ENCODE measurements at regions of chr3 and their contacts with region 1.

Region 1: DNA sequence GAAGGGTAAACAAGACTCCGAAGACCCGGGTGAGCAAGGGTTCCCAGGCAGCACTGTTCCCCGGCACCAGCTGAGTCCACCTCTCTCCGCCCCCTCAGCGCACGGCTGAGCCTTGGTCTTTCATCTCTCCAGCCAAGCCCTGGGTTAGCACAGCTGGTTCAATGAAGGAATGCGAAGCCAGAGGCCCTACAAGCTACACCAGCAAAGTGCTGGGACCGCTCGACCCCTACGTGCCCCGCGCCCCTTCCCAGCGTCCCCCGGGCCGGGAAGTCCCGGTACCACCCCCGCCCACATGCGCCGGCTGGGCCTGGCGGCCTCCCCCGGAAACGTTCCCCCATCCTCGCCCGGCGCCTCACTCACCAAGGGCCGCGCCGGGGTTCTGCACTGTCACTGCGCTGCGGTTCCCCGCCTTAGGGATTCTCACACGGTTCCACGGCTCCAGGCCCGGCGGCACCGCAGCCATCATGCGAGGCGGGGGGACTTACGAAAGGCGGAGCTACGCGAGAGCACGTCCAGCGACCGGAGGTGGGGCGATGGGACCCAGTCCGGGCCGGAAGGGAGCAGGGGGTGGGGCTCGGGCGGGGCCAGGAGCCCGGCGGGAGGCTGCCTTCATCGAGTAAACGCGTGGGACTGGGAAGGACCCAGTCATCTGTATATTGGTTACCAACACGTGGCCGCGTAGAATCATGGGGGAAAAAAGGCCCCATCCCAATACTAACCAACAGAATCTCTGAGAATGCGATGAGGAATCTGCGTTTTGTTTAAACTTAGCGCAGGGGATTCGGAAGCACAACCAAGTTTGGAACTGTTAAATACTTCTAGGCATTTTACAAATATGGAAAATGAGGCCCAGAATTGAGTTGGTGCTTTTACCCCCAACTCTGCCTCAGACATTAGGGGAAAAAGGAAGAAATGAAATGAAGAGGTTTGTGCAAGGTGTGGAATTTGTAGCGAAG is 28.7 kb downstream of the GTPBP8 start:
- DNase-seq: peak; percentile 76 to 89 (median 81)
- H3K4me3 ChIP-seq: peak overlapping the region; percentile 59 to 89
- H3K4me3 Mint-ChIP-seq: peak overlapping the region; percentile 92 to 97 (median 96)
- H3K27ac ChIP-seq: peak overlapping the region; percentile 89
- H3K27ac Mint-ChIP-seq: peak overlapping the region; percentile 91 to 98 (median 95)
- H3K4me1 ChIP-seq: peaks cover 45% of the 10 kb centered on the region
- H3K4me1 Mint-ChIP-seq: peaks cover 42 to 76% (median 61%) of the 10 kb centered on the region in 4 donors
- H3K27me3 ChIP-seq: no peaks in the 10 kb centered on the region
- H3K27me3 Mint-ChIP-seq: no peaks in the 10 kb centered on the region

Region 2: DNA sequence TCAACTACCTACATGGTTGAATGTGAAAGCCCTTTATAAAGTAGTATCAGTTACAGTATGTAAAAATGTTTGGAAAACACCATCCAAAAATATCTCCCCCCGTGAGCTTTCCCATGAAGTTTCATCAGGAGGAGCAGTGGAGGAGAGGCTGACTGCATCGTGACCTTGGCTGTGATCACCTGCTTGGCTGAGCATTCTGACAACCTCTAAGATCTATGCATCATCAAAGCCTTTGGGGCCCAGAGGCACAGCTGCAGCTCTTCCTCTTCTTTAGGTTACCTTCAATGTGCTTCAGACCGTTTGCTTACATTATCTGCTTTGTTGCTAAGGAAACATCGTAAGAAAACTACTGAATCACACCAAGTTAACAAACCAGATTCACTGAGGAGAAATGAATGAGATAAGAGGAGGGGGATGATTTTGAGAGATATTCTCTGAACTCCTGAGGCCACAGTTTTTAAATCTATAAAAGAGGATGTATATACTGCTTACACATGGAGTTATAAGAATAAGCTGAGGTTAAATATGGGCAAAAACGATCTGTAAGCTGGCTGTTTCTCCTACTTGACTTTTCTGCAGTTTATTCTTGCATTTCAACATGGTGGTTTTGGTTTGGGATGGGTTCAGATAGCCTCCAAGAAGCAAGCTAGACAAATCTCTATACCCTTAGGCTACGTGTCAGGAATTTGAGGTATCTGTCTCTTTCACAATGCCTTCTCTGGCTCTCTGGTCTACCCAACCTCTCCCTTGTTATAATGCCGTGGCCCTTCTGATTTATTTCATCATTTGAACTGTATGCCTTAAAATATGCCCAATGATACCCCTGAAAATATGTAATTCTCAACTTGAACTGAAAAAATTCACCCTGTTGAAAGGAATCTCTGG is 890.4 kb before region 1 on chr3:
- CTCF ChIA-PET with region 1: no interaction called
- POLR2A ChIA-PET with region 1: no interaction called
- intact Hi-C with region 1: loop called (anchors 1 kb)
- DNase-seq: peak; percentile 78 to 86 (median 82)
- H3K4me3 ChIP-seq: no peak overlapping the region
- H3K4me3 Mint-ChIP-seq: peak overlapping the region in 7 of 8 donors; percentile 38 to 74 (median 59)
- H3K27ac ChIP-seq: peak overlapping the region; percentile 67
- H3K27ac Mint-ChIP-seq: peak overlapping the region; percentile 78 to 97 (median 95)
- H3K4me1 ChIP-seq: peaks cover 93% of the 10 kb centered on the region
- H3K4me1 Mint-ChIP-seq: peaks cover 70 to 93% (median 82%) of the 10 kb centered on the region in 4 donors
- H3K27me3 ChIP-seq: no peaks in the 10 kb centered on the region
- H3K27me3 Mint-ChIP-seq: no peaks in the 10 kb centered on the region

Region 3: GRCh38 chr3:112990672-112991602 is 28.5 kb before region 1 on chr3 and contains the start of gene GTPBP8:
- CTCF ChIA-PET with region 1: interaction called, 6 read pairs
- POLR2A ChIA-PET with region 1: interaction called, 47 read pairs
- intact Hi-C with region 1: loop called (anchors 1 kb)
- DNase-seq: peak; percentile 79 to 88 (median 81)
- H3K4me3 ChIP-seq: peak within 1 kb of the TSS; percentile 73 to 91
- H3K4me3 Mint-ChIP-seq: peak within 1 kb of the TSS; percentile 95 to 98 (median 96)
- H3K27ac ChIP-seq: peak within 1 kb of the TSS; percentile 78
- H3K27ac Mint-ChIP-seq: peak within 1 kb of the TSS; percentile 94 to 98 (median 96)
- H3K4me1 ChIP-seq: peaks cover 49% of the 10 kb centered on the region
- H3K4me1 Mint-ChIP-seq: peaks cover 51 to 80% (median 62%) of the 10 kb centered on the region in 4 donors
- H3K27me3 ChIP-seq: no peaks in the 10 kb centered on the region
- H3K27me3 Mint-ChIP-seq: no peaks in the 10 kb centered on the region
- total RNA-seq, gene GTPBP8: 36.0 to 40.0 TPM

Region 4: DNA sequence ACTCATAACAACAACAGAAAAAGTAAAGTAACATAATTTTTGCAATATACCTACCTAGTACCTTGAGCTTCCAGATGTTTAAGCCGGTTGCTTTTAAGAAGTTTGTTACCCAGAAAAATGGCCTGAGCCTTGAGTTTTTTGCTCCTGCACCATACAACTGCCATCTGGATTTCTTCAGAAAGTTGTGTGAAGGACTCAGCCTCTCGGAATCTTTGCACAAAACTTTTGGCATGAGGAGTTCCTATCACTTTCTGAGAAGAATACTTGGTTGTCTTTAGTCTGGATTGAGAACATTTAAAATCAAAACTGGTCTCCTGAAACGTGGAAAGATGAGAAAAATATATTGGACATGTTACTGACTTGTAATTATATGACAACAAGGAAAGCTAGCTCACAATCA is 11.3 kb before region 1 on chr3:
- CTCF ChIA-PET with region 1: interaction called, 5 read pairs
- POLR2A ChIA-PET with region 1: interaction called, 33 read pairs
- intact Hi-C with region 1: loop called (anchors 1 kb)
- DNase-seq: no peak
- H3K4me3 ChIP-seq: no peak overlapping the region
- H3K4me3 Mint-ChIP-seq: no peak overlapping the region
- H3K27ac ChIP-seq: no peak overlapping the region
- H3K27ac Mint-ChIP-seq: peak overlapping the region in 2 of 7 donors; percentile 52 to 53
- H3K4me1 ChIP-seq: peaks cover 51% of the 10 kb centered on the region
- H3K4me1 Mint-ChIP-seq: peaks cover 44 to 72% (median 58%) of the 10 kb centered on the region in 4 donors
- H3K27me3 ChIP-seq: no peaks in the 10 kb centered on the region
- H3K27me3 Mint-ChIP-seq: no peaks in the 10 kb centered on the region

Region 5: DNA sequence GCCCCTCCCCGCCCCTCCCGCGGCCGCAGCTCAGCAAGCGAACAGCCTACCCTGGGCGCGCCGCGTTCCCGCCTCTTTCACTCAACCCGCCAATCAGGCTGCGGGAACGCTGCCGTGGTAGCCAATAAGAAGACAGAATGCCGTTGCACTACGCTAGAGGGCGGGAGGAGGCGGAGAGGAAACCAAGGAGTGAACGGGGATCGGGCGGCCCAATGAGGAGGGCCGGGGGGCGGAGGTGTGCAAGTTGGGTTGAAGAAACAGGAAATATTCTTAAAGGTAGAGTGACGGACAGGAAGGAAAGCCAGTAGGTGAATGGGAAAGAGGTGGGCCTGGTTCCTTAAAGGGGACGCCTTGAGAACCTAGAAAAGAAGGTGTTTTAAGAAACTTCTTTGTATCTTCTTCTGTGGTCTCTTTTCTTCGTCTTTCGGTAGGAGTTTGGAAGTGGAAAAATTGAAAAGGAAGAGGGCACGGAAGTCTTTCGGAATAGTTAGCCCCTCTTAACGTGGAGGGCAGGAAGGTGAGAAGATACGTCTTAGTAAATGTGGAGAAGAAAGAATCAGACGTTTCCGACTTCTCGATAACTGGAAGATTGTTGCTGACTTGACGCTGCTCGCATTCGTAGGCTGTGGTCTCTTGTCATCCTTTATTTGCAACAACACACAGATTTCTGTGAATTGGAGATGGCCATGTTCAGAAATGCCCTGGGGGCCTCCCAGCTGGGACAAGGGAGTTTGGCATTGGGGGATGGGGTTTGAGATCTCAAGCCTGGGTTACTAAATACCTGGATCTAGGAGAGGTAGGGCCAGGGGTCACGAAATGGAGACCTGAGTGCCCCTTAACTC is 677.4 kb after region 1 on chr3:
- CTCF ChIA-PET with region 1: no interaction called
- POLR2A ChIA-PET with region 1: interaction called, 3 read pairs
- intact Hi-C with region 1: loop called (anchors 1 kb)
- DNase-seq: peak; percentile 99 to 100 (median 100)
- H3K4me3 ChIP-seq: peak overlapping the region; percentile 74 to 90
- H3K4me3 Mint-ChIP-seq: no peak overlapping the region
- H3K27ac ChIP-seq: peak overlapping the region; percentile 86
- H3K27ac Mint-ChIP-seq: no peak overlapping the region
- H3K4me1 ChIP-seq: peaks cover 46% of the 10 kb centered on the region
- H3K4me1 Mint-ChIP-seq: peaks cover 20 to 33% (median 25%) of the 10 kb centered on the region in 4 donors
- H3K27me3 ChIP-seq: no peaks in the 10 kb centered on the region
- H3K27me3 Mint-ChIP-seq: no peaks in the 10 kb centered on the region